ENCODE measurements at regions of chr18 and their contacts with region 1.

Region 1: GRCh38 chr18:45621061-45621511 is 5.8 kb downstream of the SLC14A2 start:
- DNase-seq: no peak
- H3K4me3 ChIP-seq: no peak overlapping the region
- H3K27ac ChIP-seq: no peak overlapping the region
- H3K4me1 ChIP-seq: peaks cover 3% of the 10 kb centered on the region
- H3K27me3 ChIP-seq: no peaks in the 10 kb centered on the region
- CTCF ChIP-seq: peak; percentile 76 to 84 (median 80)
- POLR2A ChIP-seq: no peak

Region 2: GRCh38 chr18:45255197-45255890 is 365.7 kb before region 1 on chr18:
- intact Hi-C with region 1: loop called (anchors 10 kb)
- DNase-seq: no peak
- H3K4me3 ChIP-seq: no peak overlapping the region
- H3K27ac ChIP-seq: no peak overlapping the region
- H3K4me1 ChIP-seq: no peaks in the 10 kb centered on the region
- H3K27me3 ChIP-seq: no peaks in the 10 kb centered on the region
- CTCF ChIP-seq: no peak
- POLR2A ChIP-seq: no peak

Region 3: GRCh38 chr18:45416168-45416567 is 204.9 kb before region 1 on chr18:
- intact Hi-C with region 1: loop called (anchors 10 kb)
- DNase-seq: peak; percentile 61
- H3K4me3 ChIP-seq: no peak overlapping the region
- H3K27ac ChIP-seq: no peak overlapping the region
- H3K4me1 ChIP-seq: no peaks in the 10 kb centered on the region
- H3K27me3 ChIP-seq: no peaks in the 10 kb centered on the region
- CTCF ChIP-seq: no peak
- POLR2A ChIP-seq: no peak

Region 4: DNA sequence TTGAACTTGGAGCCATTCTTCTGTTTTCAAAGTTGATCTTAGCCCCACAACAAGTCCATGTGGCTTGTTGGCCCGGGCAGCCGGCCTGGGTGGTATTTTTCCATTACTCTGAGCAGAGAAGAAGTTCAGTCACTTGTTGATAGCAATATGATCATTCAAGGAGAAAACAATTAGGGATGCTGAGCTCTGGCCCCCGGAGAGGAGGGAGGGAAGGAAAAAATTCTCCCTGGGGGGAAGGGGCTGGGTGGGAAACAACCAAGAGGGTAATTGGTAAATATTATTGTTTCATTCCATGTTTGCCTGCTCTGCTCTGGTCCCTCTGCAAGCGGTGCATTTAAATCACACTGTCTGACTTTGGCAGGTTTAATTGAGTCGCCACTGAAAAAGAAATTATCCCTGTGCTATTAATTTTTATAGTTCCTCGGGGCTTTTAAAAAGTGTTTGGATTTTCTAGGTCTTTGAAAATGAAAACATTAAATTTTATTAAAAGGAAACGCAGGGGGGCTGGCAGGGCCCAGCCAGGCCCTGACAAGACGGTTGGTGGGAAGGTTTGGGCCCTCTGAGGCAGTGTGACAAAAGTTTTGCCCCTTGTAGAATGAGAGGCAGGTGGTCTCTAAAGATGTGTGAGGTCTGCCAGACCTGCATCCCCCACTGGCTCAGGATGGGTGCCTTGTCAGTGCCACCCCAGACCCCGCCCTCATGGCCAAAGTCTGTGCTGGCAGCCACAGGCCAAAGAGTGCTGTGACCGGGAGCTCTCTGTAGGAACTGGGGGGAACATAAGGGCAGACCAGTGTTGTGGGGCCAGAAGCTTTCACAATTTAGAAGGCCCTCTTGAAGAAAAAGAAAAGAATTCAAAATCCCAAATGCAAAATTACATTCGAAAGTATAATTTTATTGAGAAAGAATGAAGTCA is 58.3 kb before region 1 on chr18:
- intact Hi-C with region 1: loop called (anchors 2 kb)
- DNase-seq: no peak
- H3K4me3 ChIP-seq: no peak overlapping the region
- H3K27ac ChIP-seq: peak overlapping the region; percentile 46 to 61
- H3K4me1 ChIP-seq: no peaks in the 10 kb centered on the region
- H3K27me3 ChIP-seq: no peaks in the 10 kb centered on the region
- CTCF ChIP-seq: no peak
- POLR2A ChIP-seq: no peak

Region 5: GRCh38 chr18:45664824-45665763 is 44.0 kb after region 1 on chr18:
- intact Hi-C with region 1: no loop called
- DNase-seq: peak; percentile 47
- H3K4me3 ChIP-seq: no peak overlapping the region
- H3K27ac ChIP-seq: no peak overlapping the region
- H3K4me1 ChIP-seq: no peaks in the 10 kb centered on the region
- H3K27me3 ChIP-seq: no peaks in the 10 kb centered on the region
- CTCF ChIP-seq: peak; percentile 80 to 93 (median 89)
- POLR2A ChIP-seq: no peak

Region 6: DNA sequence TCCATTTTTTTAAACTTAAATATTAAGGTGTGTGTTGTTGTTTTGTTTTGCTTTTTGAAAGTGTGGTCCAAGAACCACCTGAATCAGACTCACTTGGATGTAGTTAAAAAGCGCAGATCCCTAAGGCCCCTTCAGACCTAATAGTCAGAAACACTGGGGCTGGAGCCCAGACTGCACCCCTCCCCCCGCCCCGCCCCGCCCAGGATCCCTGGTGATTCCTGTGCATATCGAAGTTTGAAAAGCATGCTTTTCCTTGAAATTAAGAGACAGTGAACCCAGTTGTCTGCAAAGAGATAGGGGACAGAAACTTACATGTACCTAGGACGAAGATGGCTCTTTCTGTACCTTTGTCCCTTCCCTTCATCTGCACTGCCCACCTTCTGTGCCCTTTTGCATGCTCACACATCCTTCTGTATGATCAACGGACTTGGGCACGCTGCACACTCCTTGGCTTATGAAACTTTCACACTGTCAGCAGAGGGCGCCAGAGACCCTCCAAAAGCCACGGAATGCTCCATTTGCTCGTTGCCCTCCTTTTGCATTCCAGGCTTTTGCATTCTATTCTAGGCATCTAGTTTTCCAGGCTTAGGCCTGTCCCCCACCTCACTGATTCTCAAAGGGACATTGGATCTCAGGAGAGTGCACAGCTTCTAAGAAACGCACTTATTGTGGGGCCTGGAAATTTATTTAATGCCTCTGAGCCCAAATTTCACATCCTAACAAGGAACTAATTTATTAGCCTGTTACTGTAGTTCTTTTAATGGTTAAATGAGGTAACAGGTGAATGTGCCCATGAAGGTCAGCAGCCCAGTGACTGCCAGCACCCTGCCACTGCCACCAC is 70.1 kb after region 1 on chr18:
- intact Hi-C with region 1: loop called (anchors 2 kb)
- DNase-seq: peak; percentile 78
- H3K4me3 ChIP-seq: no peak overlapping the region
- H3K27ac ChIP-seq: no peak overlapping the region
- H3K4me1 ChIP-seq: no peaks in the 10 kb centered on the region
- H3K27me3 ChIP-seq: no peaks in the 10 kb centered on the region
- CTCF ChIP-seq: peak; percentile 45 to 91 (median 84)
- POLR2A ChIP-seq: no peak

Region 7: DNA sequence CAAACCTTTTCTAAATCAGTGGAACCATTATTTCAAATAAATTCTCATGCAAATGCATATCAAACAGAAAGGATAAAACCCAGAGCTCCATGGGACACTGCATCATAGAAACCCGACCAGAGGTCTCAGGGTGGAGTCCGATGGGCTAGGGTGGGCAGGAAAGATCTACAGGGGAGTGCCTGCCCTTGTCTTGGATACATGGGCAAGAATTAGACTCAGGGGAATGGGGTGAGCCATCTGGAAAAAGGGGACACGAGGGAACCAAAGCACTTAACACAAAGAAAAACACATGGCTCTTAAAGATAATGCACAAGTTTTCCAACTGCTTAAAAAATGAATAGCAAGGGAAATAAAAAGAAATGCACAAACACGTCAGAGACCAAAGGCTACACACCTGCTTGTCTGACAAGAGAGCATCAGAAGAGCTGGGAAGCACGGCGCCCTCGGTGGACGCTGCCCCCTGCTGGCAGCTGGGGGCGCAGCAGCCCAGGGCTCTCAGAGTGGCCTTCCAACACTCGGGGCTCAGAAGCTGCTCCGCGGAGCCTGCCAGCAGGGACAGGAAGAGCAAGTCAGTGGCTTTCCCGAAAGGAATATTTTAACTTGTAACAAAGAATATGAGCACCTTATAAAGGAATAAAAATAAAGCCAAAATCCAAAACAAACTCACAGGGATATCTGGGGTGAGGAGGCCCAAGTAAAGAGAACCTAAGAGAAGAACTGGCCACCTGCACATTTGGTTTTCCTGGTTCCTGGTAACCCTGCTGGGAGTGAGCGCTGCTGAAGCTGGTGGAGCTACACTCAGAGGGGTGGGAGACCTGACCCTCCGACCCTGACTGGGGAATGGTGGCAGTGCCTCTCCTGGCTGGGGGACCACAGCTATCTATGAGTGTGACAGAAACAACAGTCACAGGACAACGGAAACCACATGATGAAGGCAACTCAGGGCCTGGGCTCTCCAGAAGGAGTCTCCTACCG is 258.9 kb after region 1 on chr18:
- intact Hi-C with region 1: loop called (anchors 5 kb)
- DNase-seq: peak; percentile 73
- H3K4me3 ChIP-seq: no peak overlapping the region
- H3K27ac ChIP-seq: peak overlapping the region; percentile 11 to 20
- H3K4me1 ChIP-seq: no peaks in the 10 kb centered on the region
- H3K27me3 ChIP-seq: no peaks in the 10 kb centered on the region
- CTCF ChIP-seq: peak; percentile 97 to 98 (median 97)
- POLR2A ChIP-seq: no peak

Region 8: GRCh38 chr18:46073474-46074331 is 452.6 kb after region 1 on chr18:
- intact Hi-C with region 1: loop called (anchors 10 kb)
- DNase-seq: peak; percentile 63
- H3K4me3 ChIP-seq: no peak overlapping the region
- H3K27ac ChIP-seq: no peak overlapping the region
- H3K4me1 ChIP-seq: no peaks in the 10 kb centered on the region
- H3K27me3 ChIP-seq: no peaks in the 10 kb centered on the region
- CTCF ChIP-seq: peak in 3 of 4 experiments; percentile 64 to 75 (median 64)
- POLR2A ChIP-seq: no peak